ENCODE measurements at regions of chr9 and their contacts with region 1.

Region 1: DNA sequence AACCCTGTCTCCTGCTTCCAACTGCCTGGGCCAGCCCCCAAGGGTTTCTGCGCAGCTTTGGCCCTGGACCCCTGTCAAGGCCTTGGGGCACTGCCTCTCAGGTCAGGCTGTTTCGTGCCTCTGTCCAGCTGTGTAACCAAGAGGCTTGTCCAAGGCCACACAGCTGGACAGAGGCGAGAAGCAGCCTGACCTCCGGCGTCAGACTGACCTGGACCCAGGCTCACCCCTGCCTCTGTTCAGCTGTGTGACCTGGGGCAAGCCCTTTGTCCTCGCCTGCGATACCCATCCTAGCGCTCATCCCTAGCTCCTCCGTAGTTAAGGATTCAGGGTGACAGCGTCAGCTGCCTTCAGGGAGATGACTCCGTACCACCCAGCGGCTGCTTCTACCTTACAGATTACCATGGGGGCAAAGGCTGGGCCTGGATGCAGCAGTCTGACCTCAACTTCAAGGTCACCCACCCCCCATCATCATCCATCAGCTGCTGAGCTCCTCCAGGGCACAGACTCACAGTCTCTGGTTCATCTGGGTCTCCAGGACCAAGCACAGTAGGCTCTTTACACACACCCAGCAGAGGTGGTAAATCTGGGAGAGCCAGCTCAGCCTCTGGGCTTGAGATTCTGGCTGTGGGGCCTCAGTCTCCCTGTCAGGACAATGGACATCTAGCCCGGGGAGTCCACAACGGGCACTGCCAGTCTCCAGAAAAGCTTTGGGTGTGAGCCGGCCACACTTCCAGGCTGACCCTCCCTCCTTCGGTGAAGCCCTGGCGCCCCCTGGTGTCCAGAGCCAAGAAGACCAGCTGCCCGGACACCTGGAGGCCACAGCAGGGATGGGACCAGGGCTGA is 7.9 kb downstream of the AK1 start:
- DNase-seq: peak; percentile 90 to 95 (median 95)
- H3K4me3 ChIP-seq: no peak overlapping the region
- H3K27ac ChIP-seq: peak overlapping the region; percentile 73 to 81
- H3K4me1 ChIP-seq: peaks cover 25% of the 10 kb centered on the region
- H3K27me3 ChIP-seq: no peaks in the 10 kb centered on the region
- CTCF ChIP-seq: peak; percentile 66 to 98 (median 97)
- EP300 ChIP-seq: no peak
- POLR2A ChIP-seq: peak; percentile 42

Region 2: GRCh38 chr9:127734747-127735529 is 134.6 kb before region 1 on chr9 and contains the start of gene TOR2A:
- intact Hi-C with region 1: loop called (anchors 2 to 5 kb)
- DNase-seq: peak; percentile 95 to 98 (median 98)
- H3K4me3 ChIP-seq: peak within 1 kb of the TSS; percentile 88
- H3K27ac ChIP-seq: peak within 1 kb of the TSS; percentile 80 to 88
- H3K4me1 ChIP-seq: peaks cover 6% of the 10 kb centered on the region
- H3K27me3 ChIP-seq: no peaks in the 10 kb centered on the region
- CTCF ChIP-seq: peak; percentile 92 to 100 (median 100)
- EP300 ChIP-seq: no peak
- POLR2A ChIP-seq: peak; percentile 93
- total RNA-seq, gene TOR2A: 8.8 to 12.2 (median 9.9) TPM

Region 3: DNA sequence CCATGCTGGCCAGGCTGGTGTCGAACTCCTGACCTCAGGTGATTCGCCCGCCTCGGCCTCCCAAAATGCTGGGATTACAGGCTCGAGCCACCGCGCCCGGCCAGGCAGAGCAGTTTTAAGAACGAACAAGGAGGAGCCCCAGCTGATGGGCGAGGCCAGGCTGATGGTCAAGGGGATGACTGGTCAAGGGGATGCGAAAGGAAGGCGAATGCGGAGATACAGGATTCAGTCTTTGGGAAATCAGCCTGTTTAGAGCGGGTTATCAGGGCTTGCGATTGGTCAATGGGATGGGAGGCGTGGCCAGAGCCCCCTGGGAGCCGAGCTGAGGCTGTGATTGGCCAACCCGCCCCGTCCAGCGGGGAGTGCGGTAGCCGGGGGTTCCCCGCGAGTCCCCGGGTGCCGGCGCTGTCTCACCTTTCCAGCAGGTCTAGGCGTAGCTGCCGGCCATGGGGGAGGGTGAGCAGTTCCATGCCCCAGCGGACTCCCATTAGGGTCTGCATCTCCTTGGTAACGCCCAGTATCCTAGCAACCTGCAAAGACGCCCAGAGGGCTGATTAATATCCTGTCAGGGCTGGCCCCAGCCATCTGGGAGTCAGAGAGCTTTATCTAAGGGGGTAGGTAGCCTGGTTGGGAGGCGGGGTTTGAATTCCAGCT is 127.0 kb before region 1 on chr9:
- intact Hi-C with region 1: loop called in 3 of 4 experiments (anchors 5 kb)
- DNase-seq: peak; percentile 66 to 82 (median 77)
- H3K4me3 ChIP-seq: peak overlapping the region; percentile 4
- H3K27ac ChIP-seq: no peak overlapping the region
- H3K4me1 ChIP-seq: peaks cover 2% of the 10 kb centered on the region
- H3K27me3 ChIP-seq: no peaks in the 10 kb centered on the region
- CTCF ChIP-seq: no peak
- EP300 ChIP-seq: no peak
- POLR2A ChIP-seq: no peak

Region 4: GRCh38 chr9:127785023-127785932 is 84.3 kb before region 1 on chr9:
- intact Hi-C with region 1: loop called (anchors 5 to 10 kb)
- DNase-seq: peak; percentile 86 to 93 (median 92)
- H3K4me3 ChIP-seq: peak overlapping the region; percentile 100
- H3K27ac ChIP-seq: peak overlapping the region; percentile 95 to 96
- H3K4me1 ChIP-seq: peaks cover 11% of the 10 kb centered on the region
- H3K27me3 ChIP-seq: no peaks in the 10 kb centered on the region
- CTCF ChIP-seq: peak; percentile 92 to 96 (median 95)
- EP300 ChIP-seq: no peak
- POLR2A ChIP-seq: peak; percentile 11

Region 5: GRCh38 chr9:127796225-127796813 is 73.2 kb before region 1 on chr9:
- intact Hi-C with region 1: loop called in 1 of 4 experiments (anchors 10 kb)
- DNase-seq: peak; percentile 90 to 93 (median 92)
- H3K4me3 ChIP-seq: no peak overlapping the region
- H3K27ac ChIP-seq: peak overlapping the region; percentile 68 to 91
- H3K4me1 ChIP-seq: peaks cover 31% of the 10 kb centered on the region
- H3K27me3 ChIP-seq: no peaks in the 10 kb centered on the region
- CTCF ChIP-seq: no peak
- EP300 ChIP-seq: no peak
- POLR2A ChIP-seq: no peak

Region 6: DNA sequence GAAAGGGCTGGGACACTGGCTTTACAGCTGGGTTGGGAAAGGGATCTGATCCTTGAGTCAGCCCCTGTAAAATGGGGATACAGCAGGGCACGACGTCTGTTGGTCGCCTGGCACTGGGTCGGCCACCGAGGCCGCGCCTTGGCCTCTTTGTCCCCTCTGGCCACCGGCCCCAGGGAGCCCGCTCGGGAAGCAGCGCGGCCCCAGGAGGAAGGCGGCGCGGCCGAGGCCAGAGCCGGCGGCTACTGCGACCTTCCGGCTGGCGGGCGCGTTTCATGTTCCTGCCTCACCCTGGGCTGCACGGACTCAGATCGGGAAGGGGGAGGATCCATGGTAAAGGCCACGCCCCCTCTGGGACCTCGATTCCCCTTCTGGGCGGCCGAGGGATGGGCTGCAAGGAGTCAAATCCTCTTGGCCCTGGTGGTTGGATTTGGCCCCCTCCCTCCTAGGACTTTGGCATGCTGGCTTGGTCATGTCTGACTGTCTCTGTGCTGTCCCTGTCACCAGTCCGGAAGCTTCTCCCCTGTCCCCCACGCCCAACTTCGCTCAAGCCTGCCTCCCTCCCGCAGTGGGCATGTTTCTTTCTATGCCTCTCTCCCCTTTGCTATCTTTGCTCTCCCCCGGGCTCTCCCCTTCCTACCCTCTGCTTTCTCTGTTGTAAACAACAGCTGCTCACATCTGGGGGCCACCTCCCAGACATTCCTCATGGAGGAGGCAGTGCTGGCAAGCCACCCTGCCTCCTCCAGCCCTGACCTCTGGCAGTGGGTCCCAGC is 41.1 kb before region 1 on chr9:
- intact Hi-C with region 1: loop called in 2 of 4 experiments (anchors 5 kb)
- DNase-seq: peak; percentile 96 to 98 (median 97)
- H3K4me3 ChIP-seq: peak overlapping the region; percentile 32
- H3K27ac ChIP-seq: peak overlapping the region; percentile 82 to 96
- H3K4me1 ChIP-seq: peaks cover 38% of the 10 kb centered on the region
- H3K27me3 ChIP-seq: no peaks in the 10 kb centered on the region
- CTCF ChIP-seq: peak in 1 of 3 donors; percentile 21
- EP300 ChIP-seq: no peak
- POLR2A ChIP-seq: peak; percentile 78